ENCODE measurements at regions of chr18 and their contacts with region 1.

Region 1: DNA sequence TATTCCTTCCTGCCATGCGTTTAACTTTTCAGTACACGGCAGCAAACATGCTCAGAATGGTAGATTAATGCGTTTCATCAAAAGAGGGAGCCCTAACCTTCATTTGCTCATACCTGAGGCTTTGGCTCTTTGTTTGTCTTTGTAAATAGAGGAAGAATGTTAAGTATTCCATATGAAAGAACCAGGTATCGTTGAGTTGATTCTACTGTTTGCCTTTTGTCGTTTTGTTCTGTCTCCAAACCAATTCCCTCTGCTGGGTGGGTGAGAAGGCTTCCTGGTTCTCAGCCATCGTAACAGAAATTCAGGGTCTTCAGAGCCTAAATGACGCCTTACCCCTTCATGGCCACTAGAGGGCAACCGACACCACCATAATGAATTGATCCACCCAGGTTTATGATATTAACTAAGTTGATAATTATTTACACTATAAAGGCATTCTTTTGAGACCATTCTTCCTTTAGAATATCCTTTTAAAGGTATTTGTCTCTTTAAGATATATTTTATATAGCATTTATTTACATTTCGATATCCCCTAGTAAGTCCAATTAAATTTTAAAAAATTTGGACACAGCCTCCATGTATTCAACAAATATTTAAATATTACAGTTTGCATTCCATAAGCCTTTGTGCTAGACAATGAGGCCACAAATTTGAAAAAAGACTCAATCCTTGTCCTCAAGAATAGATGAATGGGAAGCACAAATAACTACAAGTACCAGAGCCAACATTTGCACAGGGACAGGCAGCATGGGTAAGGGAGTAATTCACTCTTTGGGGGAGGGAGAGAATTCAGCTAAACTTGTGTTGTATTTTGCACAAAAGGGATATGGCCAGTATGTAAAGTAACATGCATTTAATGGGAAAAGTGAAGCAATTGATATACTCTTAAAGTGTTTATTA is 48.1 kb downstream of the TIMM21 start:
- DNase-seq: peak in 1 of 3 donors; percentile 54
- ATAC-seq: peak; percentile 76
- H3K4me3 ChIP-seq: no peak overlapping the region
- H3K4me1 ChIP-seq: peaks cover 9% of the 10 kb centered on the region
- CTCF ChIP-seq: peak; percentile 76

Region 2: DNA sequence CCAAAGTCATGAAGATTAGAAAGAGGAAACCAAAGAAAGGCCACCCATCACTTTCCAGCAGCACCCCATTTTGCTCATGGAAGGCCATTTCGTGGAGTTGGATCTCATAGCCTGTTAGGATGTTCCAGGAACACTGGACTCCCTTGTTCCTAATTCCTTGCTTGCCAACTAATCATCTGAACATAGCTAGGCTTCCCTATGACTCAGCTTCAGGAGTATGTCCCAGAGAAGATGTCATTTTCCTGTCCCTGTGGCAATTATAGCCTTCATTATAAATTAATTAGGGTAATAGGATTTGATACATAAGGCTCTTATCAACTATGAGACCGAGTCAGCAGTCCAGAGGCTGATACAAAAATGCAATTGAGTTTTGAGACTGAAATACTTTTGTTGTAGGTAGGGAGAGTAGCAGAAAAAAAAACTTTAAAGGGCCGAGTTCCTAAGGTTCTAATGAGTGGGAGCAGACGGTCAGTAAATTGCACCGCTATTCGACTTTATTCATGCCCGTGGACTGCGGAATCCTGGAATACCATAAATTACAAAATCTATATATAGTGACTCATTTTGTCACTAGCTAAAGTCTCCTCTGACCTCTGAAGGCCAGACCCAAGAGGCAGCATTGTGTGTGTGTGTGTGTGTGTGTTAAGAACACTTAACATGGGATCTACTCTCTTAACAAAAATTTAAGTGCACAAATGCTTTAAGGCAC is 360.7 kb before region 1 on chr18:
- intact Hi-C with region 1: no loop called
- DNase-seq: no peak
- ATAC-seq: no peak
- H3K4me3 ChIP-seq: no peak overlapping the region
- H3K4me1 ChIP-seq: no peaks in the 10 kb centered on the region
- CTCF ChIP-seq: no peak

Region 3: DNA sequence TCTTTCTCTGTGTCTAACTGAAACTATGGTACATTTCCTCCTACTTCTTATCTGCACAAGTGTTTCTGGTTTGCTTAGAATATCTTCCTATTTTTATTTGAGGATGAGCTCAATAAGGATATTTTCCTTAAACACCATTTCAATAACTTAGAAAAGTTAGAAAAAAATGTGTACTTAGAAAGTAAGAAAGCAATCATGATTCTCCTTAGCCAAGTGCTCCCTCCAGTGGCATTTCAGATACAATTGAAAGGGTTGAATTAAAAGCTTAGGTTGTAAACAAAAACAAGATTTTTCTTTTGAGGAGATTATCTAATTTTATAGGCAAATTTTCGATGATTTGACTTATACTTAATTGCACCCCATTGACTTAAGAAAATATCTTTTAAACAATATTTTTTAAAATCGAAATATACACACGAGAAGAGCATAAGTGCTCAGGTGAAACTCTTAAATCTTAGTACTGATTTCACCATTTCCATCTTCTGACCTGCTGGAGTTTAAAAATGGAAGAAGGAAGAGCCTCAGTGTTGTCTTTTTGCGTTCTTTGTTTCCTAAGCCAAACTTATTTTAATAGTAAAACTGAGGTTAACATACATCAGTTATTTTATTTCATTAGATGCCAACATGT is 146.1 kb after region 1 on chr18:
- intact Hi-C with region 1: loop called (anchors 5 kb)
- DNase-seq: peak in 1 of 3 donors; percentile 71
- ATAC-seq: peak; percentile 40
- H3K4me3 ChIP-seq: no peak overlapping the region
- H3K4me1 ChIP-seq: no peaks in the 10 kb centered on the region
- CTCF ChIP-seq: peak; percentile 9

Region 4: GRCh38 chr18:74551936-74552555 is 355.6 kb after region 1 on chr18:
- intact Hi-C with region 1: loop called in 1 of 2 experiments (anchors 5 kb)
- DNase-seq: peak in 2 of 3 donors; percentile 80 to 98
- ATAC-seq: peak; percentile 98
- H3K4me3 ChIP-seq: no peak overlapping the region
- H3K4me1 ChIP-seq: no peaks in the 10 kb centered on the region
- CTCF ChIP-seq: peak; percentile 65

Region 5: DNA sequence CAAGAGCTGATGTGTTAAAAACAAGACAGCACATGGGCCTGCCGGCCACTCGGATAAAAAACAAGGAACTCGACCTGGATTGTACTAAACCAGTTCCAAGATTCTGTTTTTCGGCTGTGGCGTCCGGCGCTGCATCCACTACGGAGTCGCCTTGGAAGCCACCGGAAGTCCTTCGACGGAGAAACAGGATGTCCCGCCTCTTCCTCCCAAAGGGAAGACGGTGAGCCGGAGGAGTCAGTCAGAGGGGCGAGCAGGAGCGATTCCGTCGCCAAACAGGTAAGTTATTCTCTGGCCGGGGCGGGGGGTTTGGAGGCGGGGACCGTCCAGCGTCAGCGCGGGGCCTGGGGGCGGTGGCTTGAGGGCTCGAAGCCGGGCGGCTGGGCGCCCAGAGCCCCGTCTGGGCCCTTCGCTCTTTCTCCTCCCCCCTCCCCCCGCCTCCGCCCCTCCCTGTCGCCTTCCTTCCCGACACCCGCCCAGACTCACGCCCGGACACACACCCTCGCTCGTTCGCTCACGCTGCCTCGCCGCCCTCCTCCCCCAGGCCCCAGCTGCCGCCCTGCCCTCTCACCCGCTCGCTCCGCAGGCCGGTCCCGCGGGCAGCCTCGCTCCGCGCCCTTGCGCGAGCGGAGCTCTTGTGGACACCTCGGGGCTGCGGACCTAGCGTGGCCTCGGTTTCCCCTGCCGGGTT is 401.3 kb after region 1 on chr18 and contains the start of gene ZNF407:
- intact Hi-C with region 1: no loop called
- DNase-seq: peak; percentile 89 to 95 (median 92)
- ATAC-seq: peak; percentile 95
- H3K4me3 ChIP-seq: peak within 1 kb of the TSS; percentile 80
- H3K4me1 ChIP-seq: peaks cover 18% of the 10 kb centered on the region
- CTCF ChIP-seq: no peak
- total RNA-seq, gene ZNF407: 13.0 to 25.1 (median 18.8) TPM

Measured in mucosa of descending colon (tissue), 3 donors.